SK-N-SH (cell line): ENCODE measurements at regions of chr1 and their contacts with region 1.

Region 1: DNA sequence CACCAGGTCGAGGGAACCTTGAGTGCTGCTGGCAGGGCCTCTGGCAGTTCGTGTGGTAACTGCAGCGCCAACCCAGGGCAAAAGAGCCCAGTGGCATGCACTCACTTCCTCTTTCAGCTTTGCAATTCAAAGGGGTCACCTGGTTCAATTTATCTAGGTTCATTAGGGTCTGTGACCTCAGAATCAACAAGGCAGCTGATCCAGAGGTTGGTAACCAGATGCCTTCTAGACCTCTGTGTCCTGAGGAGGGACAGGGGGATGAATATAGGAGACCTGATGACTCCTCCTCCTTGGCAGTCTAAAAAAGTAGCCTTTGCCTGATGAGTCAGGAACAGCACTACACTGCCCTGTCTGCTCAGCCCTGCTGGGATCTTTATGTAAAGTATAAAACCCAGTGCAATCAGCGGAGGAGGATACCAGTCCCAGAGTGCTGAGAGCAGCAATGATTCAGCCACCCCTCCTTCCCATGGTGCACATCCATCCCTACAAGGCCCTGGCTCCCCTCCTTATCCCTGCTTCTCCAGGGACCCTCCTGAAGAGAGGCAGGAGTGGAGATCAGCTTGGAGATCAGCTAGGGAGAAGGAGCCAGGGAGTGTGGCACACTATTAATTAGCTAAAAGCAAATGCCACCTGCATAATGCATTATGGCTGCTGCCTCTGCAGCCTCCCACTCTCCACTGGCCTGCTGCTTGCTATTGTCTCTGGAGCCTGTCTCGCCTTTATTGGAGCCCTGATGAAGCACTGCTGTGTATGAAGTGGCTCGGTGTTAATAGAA is 11.2 kb upstream of the FMOD start:
- DNase-seq: no peak
- H3K4me3 ChIP-seq: no peak overlapping the region
- H3K27ac ChIP-seq: peak overlapping the region in 1 of 2 experiments; percentile 97; a peak in 2 of 4 replicates
- H3K4me1 ChIP-seq: peaks cover 0 to 48% of the 10 kb centered on the region in 2 experiments; a peak in 2 of 4 replicates
- H3K27me3 ChIP-seq: peaks cover 41% of the 10 kb centered on the region; the same call in 1 of the 2 replicates
- CTCF ChIP-seq: no peak
- EP300 ChIP-seq: no peak
- RAD21 ChIP-seq: no peak

Region 2: DNA sequence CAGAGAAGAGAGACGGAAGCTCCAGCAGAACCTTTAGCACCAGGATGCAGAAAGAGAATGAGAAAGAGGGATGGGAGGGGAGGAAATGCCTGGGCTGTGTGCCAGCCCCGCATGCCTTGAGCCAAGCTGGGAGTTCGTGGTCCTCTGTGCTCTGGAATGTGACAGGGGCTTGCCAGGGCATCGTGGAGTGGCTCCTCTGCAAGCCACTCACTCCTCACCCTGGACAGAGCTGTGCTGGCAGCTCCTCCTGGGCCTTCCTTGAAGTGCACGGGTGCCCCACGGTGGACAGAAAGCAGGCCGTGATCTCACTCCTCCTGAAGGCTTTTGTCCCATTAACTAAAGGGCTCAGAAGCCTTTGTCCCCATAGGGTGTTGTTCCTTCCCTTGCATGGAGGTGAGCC is 78.6 kb after region 1 on chr1:
- CTCF ChIA-PET with region 1: interaction called, 13 read pairs
- POLR2A ChIA-PET with region 1: no interaction called
- DNase-seq: peak; percentile 61
- H3K4me3 ChIP-seq: no peak overlapping the region
- H3K27ac ChIP-seq: no peak overlapping the region
- H3K4me1 ChIP-seq: peaks cover 6 to 14% of the 10 kb centered on the region in 2 experiments; a peak in 2 of 4 replicates
- H3K27me3 ChIP-seq: no peaks in the 10 kb centered on the region
- CTCF ChIP-seq: peak; percentile 68
- EP300 ChIP-seq: no peak
- RAD21 ChIP-seq: peak; percentile 82

Region 3: DNA sequence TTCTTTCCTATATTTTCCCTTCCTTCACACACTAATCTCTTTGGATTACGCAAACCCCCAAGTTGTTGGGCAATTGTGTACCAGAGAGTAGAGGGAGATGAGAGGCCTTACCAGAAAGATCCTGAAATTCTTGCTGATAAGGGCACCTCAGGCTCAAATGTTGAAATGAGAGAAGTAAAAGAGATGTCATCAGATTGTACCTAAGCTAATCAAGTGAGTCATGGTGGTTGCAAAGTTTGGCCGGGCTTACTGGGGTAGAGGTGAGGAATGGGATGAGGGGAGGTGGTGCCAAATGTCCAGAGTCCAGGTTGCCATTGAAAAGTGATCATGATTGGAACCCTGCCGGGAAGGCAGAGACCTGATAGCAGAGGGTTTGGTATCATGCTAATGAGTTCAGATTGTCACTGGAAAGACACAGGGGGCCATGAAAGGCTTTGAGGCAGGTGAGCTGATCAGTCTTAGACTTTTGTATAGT is 174.9 kb after region 1 on chr1:
- CTCF ChIA-PET with region 1: no interaction called
- POLR2A ChIA-PET with region 1: no interaction called
- DNase-seq: no peak
- H3K4me3 ChIP-seq: no peak overlapping the region
- H3K27ac ChIP-seq: peak overlapping the region; percentile 60 to 95; a peak in 3 of 4 replicates
- H3K4me1 ChIP-seq: peaks cover 4 to 38% of the 10 kb centered on the region in 2 experiments
- H3K27me3 ChIP-seq: no peaks in the 10 kb centered on the region
- CTCF ChIP-seq: no peak
- EP300 ChIP-seq: 0 out of 4 replicates have a peak, but pooled peaks of 1 of the 2 experiments have one; percentile 19
- RAD21 ChIP-seq: no peak